Activated T-helper 1 cell treated with anti-CD3 and anti-CD28 coated beads, Interleukin-12 subunit alpha, Interleukin-12 subunit beta, Interleukin-2, Interleukin-4 antibody, amounts not matched to agents 30 ng/mL and 10 ng/mL and 1 ng/mL, durations not matched to agents 14 hours and 24 hours and 36 hours (primary cell): ENCODE measurements at regions of chr1 and their contacts with region 1.

Region 1: DNA sequence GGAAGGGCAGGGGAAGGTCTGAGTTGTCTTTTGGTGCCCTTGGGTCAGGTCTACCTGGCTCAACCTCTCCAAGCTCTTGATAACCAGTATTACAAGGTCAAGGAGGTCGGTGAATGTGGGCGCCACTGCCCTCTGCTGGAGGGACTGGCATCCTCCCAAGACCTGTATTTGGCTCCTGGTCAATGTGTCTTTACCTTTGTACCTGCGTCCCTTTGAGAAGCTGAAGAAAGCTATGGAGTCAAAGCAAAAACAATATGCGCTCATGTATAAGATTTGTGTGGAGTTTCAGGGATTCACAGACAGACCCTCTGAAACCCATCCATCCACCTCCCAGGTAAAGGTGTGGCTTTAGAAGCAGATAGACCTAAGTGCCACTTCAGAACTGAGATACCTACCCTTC is 61.8 kb upstream of the NBL1 start:
- DNase-seq: peak; percentile 54
- H3K4me3 Mint-ChIP-seq: no peak overlapping the region
- H3K27ac Mint-ChIP-seq: peak overlapping the region; percentile 25
- H3K4me1 Mint-ChIP-seq: peaks cover 7% of the 10 kb centered on the region
- H3K27me3 Mint-ChIP-seq: peaks cover 24% of the 10 kb centered on the region

Region 2: DNA sequence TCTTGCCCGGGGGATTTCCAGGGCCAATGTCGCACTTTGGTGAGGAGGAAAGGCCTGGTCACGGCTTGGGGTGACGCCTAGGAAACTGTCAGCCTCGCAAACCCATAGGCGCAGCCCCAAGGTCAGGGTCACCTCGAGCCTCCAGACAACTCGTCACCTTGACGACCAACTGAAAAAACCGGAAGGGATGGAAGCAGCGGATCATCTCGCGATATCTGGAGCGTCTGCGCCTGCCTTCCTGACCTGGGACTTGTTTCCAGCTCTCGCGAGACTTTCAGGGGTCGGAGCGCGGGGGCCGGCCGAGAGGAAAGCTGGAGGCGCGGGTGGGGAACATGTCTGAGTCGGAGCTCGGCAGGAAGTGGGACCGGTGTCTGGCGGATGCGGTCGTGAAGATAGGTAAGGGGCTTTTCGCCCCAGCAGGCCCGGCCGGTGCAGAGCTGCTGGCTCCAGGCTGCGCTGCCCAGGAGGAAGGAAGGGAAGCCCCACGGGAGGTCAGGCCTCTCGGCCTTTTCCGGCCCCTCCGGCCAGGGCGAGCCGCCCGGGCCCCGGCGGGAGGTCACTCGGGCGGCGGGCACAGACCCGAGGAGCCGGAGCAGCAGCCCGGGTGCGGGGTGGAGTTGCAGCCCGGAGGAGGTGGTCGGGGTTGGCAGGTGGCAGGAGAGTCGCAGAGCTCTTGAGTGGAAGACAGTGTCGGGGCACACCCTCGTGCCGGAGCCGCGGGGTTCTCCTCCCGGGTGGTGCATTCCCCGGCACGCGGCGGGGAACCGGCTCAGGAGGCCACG is 14.6 kb after region 1 on chr1:
- intact Hi-C with region 1: no loop called
- DNase-seq: peak; percentile 96
- H3K4me3 Mint-ChIP-seq: peak overlapping the region; percentile 97
- H3K27ac Mint-ChIP-seq: peak overlapping the region; percentile 100
- H3K4me1 Mint-ChIP-seq: peaks cover 42% of the 10 kb centered on the region
- H3K27me3 Mint-ChIP-seq: peaks cover 6% of the 10 kb centered on the region

Region 3: DNA sequence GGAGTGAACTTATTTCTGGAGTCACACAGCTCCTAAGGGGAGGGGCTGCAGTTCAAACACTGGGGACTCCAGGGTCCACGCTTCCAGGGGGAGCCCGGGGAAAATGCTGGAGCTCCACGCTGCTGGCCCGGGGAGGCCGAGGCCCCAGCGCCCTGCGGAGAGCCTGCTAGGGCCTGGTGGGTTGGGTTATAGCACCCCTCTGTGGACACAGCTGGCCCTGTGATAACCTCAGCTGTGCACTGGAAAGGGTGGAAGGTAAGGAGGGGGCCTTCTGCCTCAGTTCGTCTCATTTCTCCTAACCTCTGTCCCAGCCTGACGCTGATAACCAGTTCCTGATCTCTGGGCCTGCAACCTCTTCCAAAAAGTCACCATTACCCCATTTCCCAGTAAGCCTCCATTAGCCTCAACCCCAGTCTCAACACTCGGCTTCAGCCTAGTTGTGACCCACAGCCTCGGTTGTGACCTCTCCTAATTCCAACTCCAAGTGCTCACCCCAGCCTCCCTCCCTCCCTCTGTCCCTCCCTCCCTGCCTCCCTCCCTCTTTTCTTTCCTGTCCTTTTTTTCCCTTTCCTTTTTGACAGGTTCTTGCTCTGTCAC is 68.9 kb after region 1 on chr1:
- intact Hi-C with region 1: loop called (anchors 1 kb)
- DNase-seq: no peak
- H3K4me3 Mint-ChIP-seq: no peak overlapping the region
- H3K27ac Mint-ChIP-seq: no peak overlapping the region
- H3K4me1 Mint-ChIP-seq: peaks cover 27% of the 10 kb centered on the region
- H3K27me3 Mint-ChIP-seq: no peaks in the 10 kb centered on the region